PC-9 (cell line): ENCODE measurements at regions of chr15 and their contacts with region 1.

Region 1: DNA sequence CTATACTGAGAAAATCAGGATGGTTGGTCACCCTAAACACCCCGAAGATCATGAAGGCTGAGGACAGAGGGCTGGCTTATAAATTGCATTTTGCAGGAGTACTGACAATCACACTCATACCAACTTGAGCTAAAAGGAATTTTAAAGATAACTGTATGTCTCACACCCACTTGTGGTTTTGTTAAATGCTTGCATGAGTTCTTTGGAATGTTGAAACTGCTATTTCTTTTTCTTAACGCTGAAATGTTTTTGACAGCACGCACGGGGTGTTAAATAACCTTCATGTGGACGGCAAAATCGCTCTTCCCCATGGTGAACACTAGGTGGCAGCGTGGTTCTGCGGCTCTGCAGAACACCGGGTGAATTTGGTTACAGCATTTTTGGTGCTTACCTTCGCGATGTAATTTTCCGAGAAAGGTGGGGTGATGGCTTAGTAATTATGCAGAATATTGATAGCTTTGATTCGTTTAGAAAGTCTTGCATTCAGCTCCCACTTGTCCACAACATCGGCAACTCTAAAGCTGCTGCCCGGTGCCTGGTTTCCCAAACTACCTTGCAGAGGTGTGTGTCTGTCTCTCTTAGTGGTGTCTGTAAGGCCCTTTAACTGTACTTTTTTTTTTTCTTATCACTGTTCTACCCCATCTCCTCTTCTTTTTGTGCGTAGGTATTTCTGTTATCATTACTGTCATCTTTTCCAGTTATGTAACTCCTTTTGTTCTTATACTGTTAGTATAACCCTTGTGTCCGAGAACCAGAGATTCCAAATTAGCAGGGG is 51.7 kb downstream of the ARNT2 start:
- DNase-seq: peak; percentile 67 to 92
- H3K4me3 ChIP-seq: no peak overlapping the region
- H3K27ac ChIP-seq: peak overlapping the region; percentile 33; the same call in 1 of the 2 replicates
- H3K4me1 ChIP-seq: peaks cover 23% of the 10 kb centered on the region
- H3K27me3 ChIP-seq: no peaks in the 10 kb centered on the region
- CTCF ChIP-seq: peak; percentile 94

Region 2: GRCh38 chr15:80418892-80419537 is 36.8 kb before region 1 on chr15:
- CTCF ChIA-PET with region 1: no interaction called
- POLR2A ChIA-PET with region 1: no interaction called
- intact Hi-C with region 1: loop called (anchors 1 kb)
- DNase-seq: peak; percentile 20 to 43
- H3K4me3 ChIP-seq: no peak overlapping the region
- H3K27ac ChIP-seq: no peak overlapping the region
- H3K4me1 ChIP-seq: peaks cover 7% of the 10 kb centered on the region
- H3K27me3 ChIP-seq: 0 out of 2 replicates have a peak, but pooled peaks cover 9% of the 10 kb centered on the region
- CTCF ChIP-seq: peak; percentile 79

Region 3: GRCh38 chr15:80567721-80568157 is 111.9 kb after region 1 on chr15:
- CTCF ChIA-PET with region 1: interaction called, 6 read pairs
- POLR2A ChIA-PET with region 1: no interaction called
- intact Hi-C with region 1: loop called (anchors 1 kb)
- DNase-seq: peak; percentile 54 to 66
- H3K4me3 ChIP-seq: no peak overlapping the region
- H3K27ac ChIP-seq: no peak overlapping the region
- H3K4me1 ChIP-seq: 0 out of 2 replicates have a peak, but pooled peaks cover 4% of the 10 kb centered on the region
- H3K27me3 ChIP-seq: no peaks in the 10 kb centered on the region
- CTCF ChIP-seq: peak; percentile 80

Region 4: GRCh38 chr15:80695104-80695910 is 239.5 kb after region 1 on chr15 and contains the start of gene ABHD17C:
- CTCF ChIA-PET with region 1: interaction called, 4 read pairs
- POLR2A ChIA-PET with region 1: no interaction called
- intact Hi-C with region 1: loop called (anchors 10 kb)
- DNase-seq: peak in 1 of 2 experiments; percentile 72
- H3K4me3 ChIP-seq: peak within 1 kb of the TSS; percentile 99
- H3K27ac ChIP-seq: peak within 1 kb of the TSS; percentile 74
- H3K4me1 ChIP-seq: peaks cover 61% of the 10 kb centered on the region
- H3K27me3 ChIP-seq: no peaks in the 10 kb centered on the region
- CTCF ChIP-seq: no peak
- total RNA-seq, gene ABHD17C: 35.6 and 42.2 TPM in 2 replicates

Region 5: GRCh38 chr15:81000624-81001151 is 544.8 kb after region 1 on chr15 and contains the start of gene TLNRD1:
- CTCF ChIA-PET with region 1: no interaction called
- POLR2A ChIA-PET with region 1: interaction called, 10 read pairs
- intact Hi-C with region 1: no loop called
- DNase-seq: peak; percentile 75 to 86
- H3K4me3 ChIP-seq: peak within 1 kb of the TSS; percentile 76
- H3K27ac ChIP-seq: peak within 1 kb of the TSS; percentile 83
- H3K4me1 ChIP-seq: peaks cover 18% of the 10 kb centered on the region
- H3K27me3 ChIP-seq: no peaks in the 10 kb centered on the region
- CTCF ChIP-seq: no peak
- total RNA-seq, gene TLNRD1: 14.9 and 18.2 TPM in 2 replicates

Region 6: GRCh38 chr15:81265944-81266775 is 810.3 kb after region 1 on chr15:
- CTCF ChIA-PET with region 1: interaction called, 15 read pairs
- POLR2A ChIA-PET with region 1: no interaction called
- intact Hi-C with region 1: loop called (anchors 2 kb)
- DNase-seq: peak; percentile 52 to 59
- H3K4me3 ChIP-seq: no peak overlapping the region
- H3K27ac ChIP-seq: no peak overlapping the region
- H3K4me1 ChIP-seq: no peaks in the 10 kb centered on the region
- H3K27me3 ChIP-seq: peaks cover 68% of the 10 kb centered on the region
- CTCF ChIP-seq: peak; percentile 81